GM10248 (cell line): ENCODE measurements at regions of chr3 and their contacts with region 1.

Region 1: DNA sequence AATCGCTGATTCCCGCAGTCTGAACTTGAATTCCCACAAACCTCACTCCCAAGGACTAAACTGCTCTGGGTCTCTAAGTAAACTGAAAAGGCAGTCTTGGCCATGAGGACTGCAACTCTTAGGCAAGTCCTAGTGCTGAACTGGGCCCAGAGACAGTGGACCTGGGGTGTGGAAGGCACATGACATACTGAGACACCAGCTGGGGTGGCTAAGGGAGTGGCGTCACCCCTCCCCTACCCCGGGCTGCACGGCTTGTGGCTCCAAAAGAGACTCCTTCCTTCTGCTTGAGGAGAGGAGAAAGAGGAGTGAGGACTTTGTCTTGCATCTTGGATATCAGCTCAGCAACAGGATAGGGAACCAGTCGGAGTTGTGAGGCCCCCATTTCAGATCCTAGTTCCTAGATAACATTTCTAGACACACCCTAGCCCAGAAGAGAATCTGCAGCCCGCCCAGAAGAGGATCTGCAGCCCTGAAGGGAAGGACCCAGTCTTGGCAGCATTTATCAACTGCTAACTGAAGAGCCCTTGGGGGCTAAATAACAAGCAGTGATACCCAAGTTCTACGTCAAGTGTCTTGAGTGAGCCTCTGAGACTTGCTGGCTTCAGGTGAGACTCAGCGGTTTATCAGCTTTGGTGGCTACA is 110.7 kb upstream of the C3orf80 start:
- DNase-seq: no peak
- CTCF ChIP-seq: no peak

Region 2: GRCh38 chr3:160133757-160134156 is 19.3 kb after region 1 on chr3:
- CTCF ChIA-PET with region 1: interaction called, 14 read pairs
- POLR2A ChIA-PET with region 1: no interaction called
- DNase-seq: no peak
- CTCF ChIP-seq: no peak

Region 3: GRCh38 chr3:160544844-160545503 is 430.5 kb after region 1 on chr3:
- CTCF ChIA-PET with region 1: no interaction called
- POLR2A ChIA-PET with region 1: no interaction called
- DNase-seq: no peak
- CTCF ChIP-seq: no peak